Right cardiac atrium (tissue), 5 donors: ENCODE measurements at regions of chr19 and their contacts with region 1.

Region 1: GRCh38 chr19:20278342-20278741 is 111.3 kb downstream of the ZNF486 start:
- DNase-seq: no peak
- ATAC-seq: no peak
- H3K4me3 ChIP-seq: no peak overlapping the region
- H3K27ac ChIP-seq: no peak overlapping the region
- H3K4me1 ChIP-seq: no peaks in the 10 kb centered on the region
- H3K27me3 ChIP-seq: no peaks in the 10 kb centered on the region

Region 2: DNA sequence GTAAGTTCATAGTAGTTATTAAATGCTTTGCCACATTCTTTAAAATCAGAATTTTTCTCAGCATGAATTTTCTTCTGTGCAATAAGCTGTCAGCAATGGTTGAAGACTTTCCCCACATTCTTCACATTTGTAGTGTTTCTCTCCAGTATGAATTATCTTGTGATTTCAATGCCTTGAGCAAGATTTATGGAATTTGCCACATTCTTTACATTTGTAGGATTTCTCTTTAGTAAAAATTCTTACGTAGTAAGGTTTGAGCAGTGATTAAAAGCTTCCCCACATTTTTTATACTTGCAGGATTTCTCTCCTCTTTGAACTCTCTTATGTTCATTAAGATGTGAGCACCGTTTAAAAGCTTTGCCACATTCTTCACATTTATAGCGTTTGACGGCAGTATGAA is 272.6 kb before region 1 on chr19:
- intact Hi-C with region 1: loop called in 1 of 4 experiments (anchors 10 kb)
- DNase-seq: no peak
- ATAC-seq: no peak
- H3K4me3 ChIP-seq: no peak overlapping the region
- H3K27ac ChIP-seq: no peak overlapping the region
- H3K4me1 ChIP-seq: no peaks in the 10 kb centered on the region
- H3K27me3 ChIP-seq: no peaks in the 10 kb centered on the region